Activated T-helper 2 cell treated with anti-CD3 and anti-CD28 coated beads, Interferon-gamma antibody, Interleukin-2, Interleukin-4, amounts not matched to agents 10 μg/mL and 5 μg/mL and 100 μg/mL, durations not matched to agents 14 hours and 24 hours and 36 hours (primary cell): ENCODE measurements at regions of chr5 and their contacts with region 1.

Region 1: GRCh38 chr5:81751009-81751835 is at the start of gene SSBP2:
- DNase-seq: peak; percentile 99
- H3K4me3 Mint-ChIP-seq: peak within 1 kb of the TSS; percentile 92
- H3K27ac Mint-ChIP-seq: peak within 1 kb of the TSS; percentile 93
- H3K4me1 Mint-ChIP-seq: peaks cover 30% of the 10 kb centered on the region
- H3K27me3 Mint-ChIP-seq: peaks cover 15% of the 10 kb centered on the region
- total RNA-seq, gene SSBP2: 24.3 and 29.5 TPM in 2 replicates

Region 2: DNA sequence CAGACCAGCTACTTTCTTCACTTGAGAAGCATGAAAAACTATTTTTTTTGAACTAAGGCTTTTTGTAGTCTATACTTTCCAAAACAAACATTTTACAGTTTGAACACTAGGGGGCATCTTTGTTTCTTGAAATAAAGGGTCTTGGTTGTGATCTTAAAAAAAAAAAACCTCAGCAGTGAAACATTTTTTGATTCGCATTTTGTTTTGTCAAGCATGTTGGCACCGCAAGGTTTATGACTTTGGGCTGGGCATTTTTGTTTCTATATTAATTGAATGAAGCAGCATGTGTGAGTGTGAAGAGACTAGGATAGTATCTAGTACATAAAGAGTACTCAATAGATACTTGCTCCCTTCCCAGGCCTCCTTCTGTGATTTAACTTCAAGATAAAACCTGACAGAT is 325.7 kb before region 1 on chr5:
- intact Hi-C with region 1: loop called (anchors 2 kb)
- DNase-seq: no peak
- H3K4me3 Mint-ChIP-seq: no peak overlapping the region
- H3K27ac Mint-ChIP-seq: no peak overlapping the region
- H3K4me1 Mint-ChIP-seq: peaks cover 35% of the 10 kb centered on the region
- H3K27me3 Mint-ChIP-seq: no peaks in the 10 kb centered on the region

Region 3: DNA sequence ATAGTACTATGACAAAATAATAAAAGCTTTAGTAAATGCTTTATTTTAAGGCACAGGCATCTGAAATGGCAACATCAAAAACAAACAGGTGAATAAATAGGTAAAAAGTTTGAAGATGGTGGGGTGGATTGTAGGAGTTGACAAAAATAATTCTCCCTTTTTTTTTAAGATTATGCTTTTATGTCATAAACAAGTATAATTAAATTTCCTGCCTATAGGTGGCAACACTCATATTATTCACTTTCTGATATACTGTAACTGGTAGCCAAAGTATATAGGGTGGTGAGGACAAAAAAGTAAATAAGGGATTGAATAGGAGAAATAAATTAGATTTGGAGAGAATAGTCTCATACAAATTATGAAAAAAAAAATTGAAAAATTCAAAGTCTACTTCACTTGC is 237.2 kb before region 1 on chr5:
- intact Hi-C with region 1: loop called (anchors 2 kb)
- DNase-seq: no peak
- H3K4me3 Mint-ChIP-seq: no peak overlapping the region
- H3K27ac Mint-ChIP-seq: no peak overlapping the region
- H3K4me1 Mint-ChIP-seq: peaks cover 6% of the 10 kb centered on the region
- H3K27me3 Mint-ChIP-seq: no peaks in the 10 kb centered on the region

Region 4: GRCh38 chr5:81631124-81631523 is 120.1 kb before region 1 on chr5:
- intact Hi-C with region 1: loop called (anchors 2 kb)
- DNase-seq: peak; percentile 42
- H3K4me3 Mint-ChIP-seq: no peak overlapping the region
- H3K27ac Mint-ChIP-seq: no peak overlapping the region
- H3K4me1 Mint-ChIP-seq: peaks cover 17% of the 10 kb centered on the region
- H3K27me3 Mint-ChIP-seq: no peaks in the 10 kb centered on the region

Region 5: DNA sequence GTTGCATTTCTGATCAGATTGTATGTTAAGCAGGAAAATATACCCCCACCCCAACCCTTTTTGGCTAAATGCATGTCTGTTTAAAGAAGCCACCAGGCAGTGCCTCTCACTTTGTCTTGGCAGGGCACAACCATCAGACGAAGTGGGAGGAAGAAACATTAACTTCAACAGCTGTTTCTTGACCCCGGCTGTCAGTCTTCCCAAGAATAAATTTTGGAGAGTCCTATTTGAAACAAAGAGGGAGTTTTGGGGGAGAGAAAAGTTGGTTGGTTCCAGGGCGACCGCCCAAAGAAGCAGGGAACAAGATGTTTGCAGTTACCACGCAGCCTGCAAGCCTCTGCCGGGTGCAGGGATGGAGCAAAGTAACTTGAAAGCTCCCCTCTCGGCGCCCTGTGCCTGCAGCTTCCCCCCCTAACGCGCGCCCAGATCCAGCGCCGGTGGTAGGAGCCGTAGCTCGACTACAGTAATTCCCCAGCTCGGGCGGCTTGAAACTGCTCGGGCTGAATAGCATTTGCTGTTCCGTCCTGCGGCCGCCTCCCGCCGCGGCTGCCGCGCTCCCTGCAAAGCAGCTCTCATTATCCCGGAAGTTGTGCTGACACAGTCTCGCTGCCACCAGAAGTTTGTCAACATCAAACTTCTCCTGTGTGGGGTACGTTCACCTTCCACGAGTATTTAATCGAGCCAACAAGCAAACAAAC is 100.4 kb after region 1 on chr5:
- intact Hi-C with region 1: loop called (anchors 1 kb)
- DNase-seq: peak; percentile 88
- H3K4me3 Mint-ChIP-seq: peak overlapping the region; percentile 85
- H3K27ac Mint-ChIP-seq: peak overlapping the region; percentile 94
- H3K4me1 Mint-ChIP-seq: peaks cover 38% of the 10 kb centered on the region
- H3K27me3 Mint-ChIP-seq: no peaks in the 10 kb centered on the region

Region 6: DNA sequence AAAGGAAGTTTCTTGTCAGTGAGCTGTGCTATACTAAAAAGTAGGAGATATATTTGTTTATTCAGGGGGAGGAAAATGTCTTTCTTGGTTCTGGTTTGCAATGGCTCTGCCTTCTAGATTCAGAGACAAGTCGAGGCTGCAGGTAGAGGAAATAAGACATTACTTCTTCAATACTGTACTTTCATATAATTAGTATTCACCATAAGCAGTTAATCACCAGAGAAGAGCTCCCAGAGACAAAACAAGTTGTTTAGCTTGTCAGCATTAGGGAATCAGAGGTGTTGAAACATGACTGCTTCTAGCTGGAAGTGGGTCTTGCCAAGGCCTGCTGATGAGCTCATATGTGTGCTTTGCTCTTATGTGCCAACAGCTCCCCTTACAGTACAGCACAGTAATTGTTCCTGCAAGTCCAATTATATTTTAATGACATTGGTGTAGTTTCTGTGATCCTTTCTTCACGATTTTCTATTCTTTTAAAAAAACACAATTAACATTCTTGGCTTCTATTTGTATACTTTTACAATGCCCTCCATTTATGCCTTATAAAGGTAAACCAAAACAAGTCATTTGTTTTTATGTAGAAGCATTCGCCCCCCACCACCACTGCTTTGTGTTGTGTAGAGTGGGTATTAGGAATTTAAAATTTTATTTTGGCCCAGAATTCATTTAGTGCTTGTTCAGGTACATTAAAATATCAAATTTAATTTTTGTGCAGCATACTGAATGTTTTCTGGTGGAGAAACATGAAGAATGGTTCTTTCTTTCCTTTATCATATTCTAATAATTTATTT is 414.7 kb after region 1 on chr5:
- intact Hi-C with region 1: loop called (anchors 5 kb)
- DNase-seq: no peak
- H3K4me3 Mint-ChIP-seq: no peak overlapping the region
- H3K27ac Mint-ChIP-seq: no peak overlapping the region
- H3K4me1 Mint-ChIP-seq: peaks cover 7% of the 10 kb centered on the region
- H3K27me3 Mint-ChIP-seq: no peaks in the 10 kb centered on the region